ENCODE measurements at regions of chr12 and their contacts with region 1.

Region 1: DNA sequence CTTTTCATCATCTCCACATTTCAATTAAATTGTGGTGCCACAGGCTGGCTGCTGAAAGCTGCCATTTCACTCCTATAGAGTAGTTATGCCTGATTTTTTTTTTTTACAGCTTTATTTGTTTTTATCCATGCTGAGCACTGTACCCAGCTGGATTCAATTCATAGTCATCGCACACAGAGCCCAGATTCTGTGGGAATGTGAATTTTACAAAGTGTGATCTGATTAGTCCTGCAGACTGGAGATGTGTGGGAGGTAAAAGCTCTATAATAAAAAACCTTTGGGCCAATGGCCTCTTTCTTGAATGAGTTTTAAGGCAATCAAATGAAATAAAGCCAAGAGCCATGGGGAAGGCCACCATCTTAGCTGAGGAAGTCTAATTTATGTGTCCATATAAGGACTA is 190.2 kb downstream of the ANO4 start:
- DNase-seq: no peak
- H3K4me3 ChIP-seq: no peak overlapping the region
- H3K27ac ChIP-seq: no peak overlapping the region
- H3K4me1 ChIP-seq: peaks cover 0 to 13% (median 4%) of the 10 kb centered on the region in 4 donors
- H3K27me3 ChIP-seq: no peaks in the 10 kb centered on the region
- CTCF ChIP-seq: no peak
- EP300 ChIP-seq: no peak
- POLR2A ChIP-seq: no peak

Region 2: DNA sequence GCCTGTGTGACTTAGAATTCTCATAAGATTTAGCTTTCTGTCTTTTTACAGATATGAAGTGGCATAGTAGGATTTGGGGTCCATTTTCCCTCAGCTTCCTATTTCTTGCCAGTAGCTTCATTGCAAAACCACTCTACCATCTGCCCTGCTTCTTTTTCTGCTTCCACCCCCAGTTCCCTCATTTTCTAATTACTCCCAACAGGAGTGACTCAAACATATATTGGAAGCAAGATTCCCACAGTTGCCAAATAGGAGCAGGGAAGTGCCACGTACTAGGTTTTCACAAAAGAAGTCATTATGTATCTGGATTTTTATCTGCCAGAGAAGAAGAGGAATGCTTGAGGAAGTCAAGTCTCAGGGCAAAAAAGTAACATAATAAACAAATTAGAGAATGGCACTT is 126.2 kb before region 1 on chr12:
- intact Hi-C with region 1: no loop called
- DNase-seq: no peak
- H3K4me3 ChIP-seq: no peak overlapping the region
- H3K27ac ChIP-seq: no peak overlapping the region
- H3K4me1 ChIP-seq: no peaks in the 10 kb centered on the region
- H3K27me3 ChIP-seq: no peaks in the 10 kb centered on the region
- CTCF ChIP-seq: no peak
- EP300 ChIP-seq: no peak
- POLR2A ChIP-seq: no peak

Region 3: GRCh38 chr12:100877776-100878175 is 107.0 kb before region 1 on chr12:
- intact Hi-C with region 1: no loop called
- DNase-seq: no peak
- H3K4me3 ChIP-seq: no peak overlapping the region
- H3K27ac ChIP-seq: no peak overlapping the region
- H3K4me1 ChIP-seq: no peaks in the 10 kb centered on the region
- H3K27me3 ChIP-seq: no peaks in the 10 kb centered on the region
- CTCF ChIP-seq: no peak
- EP300 ChIP-seq: no peak
- POLR2A ChIP-seq: no peak

Region 4: GRCh38 chr12:100927826-100928225 is 57.0 kb before region 1 on chr12:
- intact Hi-C with region 1: no loop called
- DNase-seq: no peak
- H3K4me3 ChIP-seq: no peak overlapping the region
- H3K27ac ChIP-seq: no peak overlapping the region
- H3K4me1 ChIP-seq: no peaks in the 10 kb centered on the region
- H3K27me3 ChIP-seq: no peaks in the 10 kb centered on the region
- CTCF ChIP-seq: no peak
- EP300 ChIP-seq: no peak
- POLR2A ChIP-seq: no peak

Region 5: DNA sequence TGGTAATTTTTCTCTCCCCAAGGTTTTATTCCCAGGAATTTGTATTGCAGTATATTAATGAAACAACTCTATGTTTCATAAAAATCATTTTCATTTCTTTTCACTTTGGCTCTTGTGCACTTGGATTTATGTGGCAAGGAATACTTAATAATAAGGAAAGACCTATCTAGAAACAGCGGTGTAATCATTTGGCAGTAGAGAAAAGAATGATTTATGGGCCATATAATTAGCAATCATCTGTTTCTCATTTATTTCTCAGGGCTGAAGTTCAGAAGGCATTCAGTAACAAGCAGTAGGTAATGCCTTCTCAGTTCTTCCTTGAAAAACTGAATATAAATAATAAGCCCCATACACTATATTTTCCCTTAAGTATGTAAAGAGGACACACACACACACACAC is 17.6 kb before region 1 on chr12:
- intact Hi-C with region 1: loop called (anchors 1 kb)
- DNase-seq: no peak
- H3K4me3 ChIP-seq: no peak overlapping the region
- H3K27ac ChIP-seq: no peak overlapping the region
- H3K4me1 ChIP-seq: peaks cover 0 to 12% (median 5%) of the 10 kb centered on the region in 4 donors
- H3K27me3 ChIP-seq: no peaks in the 10 kb centered on the region
- CTCF ChIP-seq: no peak
- EP300 ChIP-seq: no peak
- POLR2A ChIP-seq: no peak

Region 6: GRCh38 chr12:101200145-101200544 is 215.3 kb after region 1 on chr12:
- intact Hi-C with region 1: no loop called
- DNase-seq: no peak
- H3K4me3 ChIP-seq: no peak overlapping the region
- H3K27ac ChIP-seq: no peak overlapping the region
- H3K4me1 ChIP-seq: no peaks in the 10 kb centered on the region
- H3K27me3 ChIP-seq: no peaks in the 10 kb centered on the region
- CTCF ChIP-seq: no peak
- EP300 ChIP-seq: no peak
- POLR2A ChIP-seq: no peak

Measured in sigmoid colon (tissue), 7 donors.